BJ (cell line): ENCODE measurements at regions of chr18 and their contacts with region 1.

Region 1: GRCh38 chr18:28961669-28962228 is 784.8 kb upstream of the CDH2 start:
- DNase-seq: no peak
- H3K4me3 ChIP-seq: no peak overlapping the region
- H3K27me3 ChIP-seq: no peaks in the 10 kb centered on the region
- CTCF ChIP-seq: peak; percentile 65

Region 2: DNA sequence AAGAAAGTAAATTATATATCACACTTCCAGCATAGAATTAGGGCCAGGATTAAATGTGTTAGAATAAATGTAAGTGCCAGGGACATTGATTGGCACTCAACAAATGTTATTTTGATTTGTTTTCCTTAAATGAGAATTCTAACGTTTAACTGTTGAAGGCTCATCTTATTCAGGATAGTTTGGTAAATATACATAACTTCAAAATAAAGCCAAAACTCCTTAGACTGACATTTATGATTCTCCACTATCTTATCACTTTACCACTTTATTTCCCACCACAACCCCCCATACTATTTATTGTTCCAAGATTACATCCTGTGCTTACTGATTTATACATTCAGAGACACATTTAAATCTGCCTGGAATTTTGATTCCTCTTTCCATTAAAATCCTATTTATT is 15.3 kb before region 1 on chr18:
- CTCF ChIA-PET with region 1: no interaction called
- POLR2A ChIA-PET with region 1: no interaction called
- DNase-seq: no peak
- H3K4me3 ChIP-seq: no peak overlapping the region
- H3K27me3 ChIP-seq: no peaks in the 10 kb centered on the region
- CTCF ChIP-seq: no peak

Region 3: DNA sequence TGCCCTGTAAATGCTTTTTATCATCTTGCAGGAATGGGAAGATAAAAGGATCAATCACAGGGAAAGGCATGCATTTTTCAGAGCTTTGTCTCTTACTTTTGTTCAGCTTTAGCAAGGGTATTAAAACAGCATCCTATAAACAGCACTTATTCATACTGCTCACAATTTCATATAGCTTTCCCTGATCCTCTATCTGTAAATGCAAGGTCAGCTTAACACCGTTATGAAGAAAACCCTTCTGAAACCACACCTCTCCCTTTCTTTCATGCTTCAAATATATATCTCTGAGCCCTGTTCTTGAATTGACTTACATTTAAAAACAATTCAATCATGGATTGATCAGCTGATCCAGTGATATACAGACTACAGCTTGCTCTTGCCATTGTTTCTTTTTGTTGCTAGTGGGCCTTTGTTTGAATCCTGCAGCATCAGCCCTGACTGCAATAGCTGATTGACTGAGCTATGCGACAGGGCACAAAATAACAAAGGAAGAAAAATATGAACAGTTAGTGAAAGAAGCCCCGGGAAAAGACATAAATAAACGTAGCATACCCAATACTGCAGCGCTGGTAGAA is 10.7 kb after region 1 on chr18:
- CTCF ChIA-PET with region 1: interaction called, 15 read pairs
- POLR2A ChIA-PET with region 1: no interaction called
- DNase-seq: no peak
- H3K4me3 ChIP-seq: no peak overlapping the region
- H3K27me3 ChIP-seq: no peaks in the 10 kb centered on the region
- CTCF ChIP-seq: no peak

Region 4: GRCh38 chr18:29383311-29384273 is 421.8 kb after region 1 on chr18:
- CTCF ChIA-PET with region 1: no interaction called
- POLR2A ChIA-PET with region 1: no interaction called
- DNase-seq: no peak
- H3K4me3 ChIP-seq: no peak overlapping the region
- H3K27me3 ChIP-seq: no peaks in the 10 kb centered on the region
- CTCF ChIP-seq: no peak

Region 5: DNA sequence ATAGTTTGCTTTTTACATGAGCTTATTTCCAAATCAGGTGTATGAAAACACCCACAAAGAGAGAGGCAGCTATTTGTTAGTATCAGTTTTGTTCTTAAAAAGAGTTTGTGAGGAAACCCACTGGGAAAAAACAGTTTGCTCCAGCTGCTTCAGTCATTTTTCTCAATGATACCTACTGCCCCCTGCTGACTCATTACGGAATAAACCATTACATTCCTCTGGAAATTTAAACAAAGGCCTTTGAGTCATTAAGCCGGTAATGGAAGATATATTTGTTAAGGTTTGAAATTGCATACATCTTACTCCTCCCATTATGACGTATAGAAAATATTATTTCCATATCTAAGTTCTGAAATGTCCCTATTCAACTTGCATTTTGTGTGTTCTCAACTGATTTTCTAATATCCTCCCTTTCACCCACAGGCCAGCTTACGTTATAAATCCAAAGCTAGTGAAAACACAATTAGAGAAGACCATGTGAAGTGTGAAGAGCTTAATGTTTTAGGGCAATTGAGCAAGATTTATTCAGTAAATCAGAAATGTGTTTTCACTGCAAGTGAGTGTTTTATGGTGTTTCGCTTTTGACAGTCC is 1319.2 kb after region 1 on chr18:
- CTCF ChIA-PET with region 1: interaction called, 14 read pairs
- POLR2A ChIA-PET with region 1: no interaction called
- DNase-seq: peak; percentile 8
- H3K4me3 ChIP-seq: no peak overlapping the region
- H3K27me3 ChIP-seq: no peaks in the 10 kb centered on the region
- CTCF ChIP-seq: peak; percentile 72